ENCODE measurements at regions of chr3 and their contacts with region 1.

Region 1: GRCh38 chr3:25837038-25837437 is 47.1 kb downstream of the OXSM start:
- DNase-seq: no peak
- H3K4me3 ChIP-seq: no peak overlapping the region
- H3K27ac ChIP-seq: no peak overlapping the region
- H3K4me1 ChIP-seq: no peaks in the 10 kb centered on the region
- H3K27me3 ChIP-seq: no peaks in the 10 kb centered on the region
- CTCF ChIP-seq: no peak
- POLR2A ChIP-seq: no peak

Region 2: GRCh38 chr3:25354071-25354470 is 483.0 kb before region 1 on chr3:
- intact Hi-C with region 1: loop called (anchors 5 kb)
- DNase-seq: no peak
- H3K4me3 ChIP-seq: no peak overlapping the region
- H3K27ac ChIP-seq: no peak overlapping the region
- H3K4me1 ChIP-seq: no peaks in the 10 kb centered on the region
- H3K27me3 ChIP-seq: no peaks in the 10 kb centered on the region
- CTCF ChIP-seq: no peak
- POLR2A ChIP-seq: no peak

Region 3: DNA sequence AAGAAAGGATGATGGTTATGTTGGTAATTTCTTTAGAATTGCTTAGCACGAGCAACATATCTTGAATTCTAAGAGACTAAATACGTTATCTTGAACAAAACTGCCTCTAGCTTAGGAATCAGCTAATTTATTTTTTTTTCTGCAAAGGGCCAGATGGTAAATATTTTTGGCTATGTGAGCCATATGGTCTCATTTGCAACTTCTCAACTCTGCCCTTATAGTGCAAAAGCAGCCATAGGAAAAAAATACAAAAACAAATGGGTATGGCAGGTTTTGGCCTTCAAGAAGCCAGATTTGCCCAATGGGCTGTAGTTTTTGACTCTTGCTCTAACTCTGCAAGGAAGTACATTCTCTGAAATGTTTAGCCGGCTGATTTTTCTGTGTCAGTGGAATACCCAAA is 35.3 kb before region 1 on chr3:
- intact Hi-C with region 1: no loop called
- DNase-seq: no peak
- H3K4me3 ChIP-seq: no peak overlapping the region
- H3K27ac ChIP-seq: no peak overlapping the region
- H3K4me1 ChIP-seq: no peaks in the 10 kb centered on the region
- H3K27me3 ChIP-seq: no peaks in the 10 kb centered on the region
- CTCF ChIP-seq: no peak
- POLR2A ChIP-seq: no peak

Region 4: DNA sequence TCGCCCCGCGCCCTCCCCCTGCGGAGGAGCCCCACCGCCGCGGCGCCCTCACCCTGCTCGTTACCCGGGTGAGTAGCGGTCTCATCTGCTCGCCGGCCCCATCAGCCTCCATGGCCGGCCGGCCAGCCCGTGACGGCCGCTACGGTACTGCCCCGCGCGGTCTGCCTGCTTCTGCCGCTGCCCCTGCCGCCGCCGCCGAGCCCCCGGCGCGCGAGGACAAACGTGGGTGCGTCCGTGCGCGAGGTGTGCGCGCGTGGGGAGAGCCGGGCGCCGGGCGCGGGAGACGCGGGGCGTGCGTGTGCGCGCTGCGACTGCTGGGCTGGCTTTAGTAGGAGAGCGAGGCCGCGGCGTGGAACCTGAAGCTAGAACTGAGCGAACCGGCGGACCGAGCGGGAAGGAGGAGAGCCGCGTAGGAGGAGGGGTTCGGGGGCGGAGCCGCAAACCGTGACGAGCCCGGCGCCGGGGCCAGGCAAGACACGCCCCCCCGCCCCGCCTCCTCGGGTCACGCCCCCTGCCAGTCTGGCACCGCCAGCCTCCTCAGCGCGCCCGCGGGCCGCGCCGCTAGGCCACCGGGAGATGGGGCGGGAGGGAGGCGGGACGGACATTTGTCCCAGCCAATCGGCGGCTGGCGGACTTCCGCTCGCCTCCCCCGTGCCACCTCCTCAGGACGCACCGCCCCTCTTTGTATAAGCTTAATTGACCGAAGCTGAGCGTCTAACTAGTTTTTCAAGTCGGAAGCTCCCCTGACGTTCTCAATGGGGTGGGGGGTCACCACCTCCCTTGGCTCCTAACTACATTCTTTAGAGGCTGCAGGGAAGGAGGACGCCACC is 1647.2 kb after region 1 on chr3 and contains the start of gene SLC4A7:
- intact Hi-C with region 1: no loop called
- DNase-seq: peak; percentile 96 to 98
- H3K4me3 ChIP-seq: peak within 1 kb of the TSS; percentile 86 to 99 (median 91)
- H3K27ac ChIP-seq: peak within 1 kb of the TSS; percentile 95 to 98
- H3K4me1 ChIP-seq: peaks cover 0 to 9% of the 10 kb centered on the region in 2 donors
- H3K27me3 ChIP-seq: no peaks in the 10 kb centered on the region
- CTCF ChIP-seq: no peak
- POLR2A ChIP-seq: peak; percentile 63
- total RNA-seq, gene SLC4A7: 32.8 to 219 (median 204) TPM

Measured in breast epithelium (tissue), 4 donors.